Dorsolateral prefrontal cortex (tissue), 120 donors: ENCODE measurements at regions of chr3 and their contacts with region 1.

Region 1: DNA sequence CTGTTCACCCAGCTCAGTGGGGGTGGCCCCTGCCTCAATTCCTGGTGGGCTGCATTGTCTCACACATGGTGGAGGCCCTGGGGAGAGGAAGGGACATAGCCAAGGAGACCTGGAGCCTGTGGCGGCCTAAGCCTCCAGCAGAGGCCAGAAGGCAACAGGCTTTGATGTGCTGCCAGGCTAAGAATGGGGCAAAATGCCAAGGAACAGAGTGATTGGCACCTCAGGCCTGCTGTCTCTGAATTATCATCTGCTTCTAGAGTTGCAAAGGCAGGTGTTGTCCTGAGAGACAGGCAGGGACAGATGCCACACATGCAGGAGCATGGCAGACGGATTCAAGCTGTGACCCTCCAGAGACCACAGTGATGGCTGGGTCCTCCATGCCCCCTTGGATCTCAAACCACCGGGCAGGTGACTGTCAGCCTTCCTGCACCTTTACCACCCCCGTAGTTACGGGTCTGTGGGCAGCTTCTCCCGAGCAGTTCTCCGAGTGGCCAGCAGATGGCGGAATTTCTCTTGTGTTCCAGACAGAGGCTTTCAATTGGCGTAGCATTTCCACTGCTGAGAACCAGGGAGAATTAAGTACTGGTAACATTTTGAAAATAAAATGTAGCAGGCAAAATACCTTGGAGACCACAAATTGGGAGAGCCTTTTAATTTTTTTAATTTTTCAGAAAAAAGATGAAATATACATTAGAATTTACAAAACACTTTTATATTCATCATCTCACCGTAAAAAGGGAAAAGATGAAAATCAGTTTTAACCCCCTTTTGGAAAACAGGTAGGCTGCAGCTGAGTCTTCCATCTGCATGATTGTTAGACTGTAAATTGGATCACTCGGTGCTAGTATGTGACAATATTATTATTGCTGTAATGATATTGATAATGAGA is 525.5 kb upstream of the CFAP20DC start:
- DNase-seq: peak; percentile 77 to 95 (median 92)
- H3K4me3 ChIP-seq: peak overlapping the region in 2 of 59 donors; percentile 3 to 6
- H3K27ac ChIP-seq: peak overlapping the region in 20 of 59 donors; percentile 8 to 94 (median 84)
- H3K27me3 ChIP-seq: no peaks in the 10 kb centered on the region
- CTCF ChIP-seq: peak; percentile 94 to 100 (median 99)

Region 2: DNA sequence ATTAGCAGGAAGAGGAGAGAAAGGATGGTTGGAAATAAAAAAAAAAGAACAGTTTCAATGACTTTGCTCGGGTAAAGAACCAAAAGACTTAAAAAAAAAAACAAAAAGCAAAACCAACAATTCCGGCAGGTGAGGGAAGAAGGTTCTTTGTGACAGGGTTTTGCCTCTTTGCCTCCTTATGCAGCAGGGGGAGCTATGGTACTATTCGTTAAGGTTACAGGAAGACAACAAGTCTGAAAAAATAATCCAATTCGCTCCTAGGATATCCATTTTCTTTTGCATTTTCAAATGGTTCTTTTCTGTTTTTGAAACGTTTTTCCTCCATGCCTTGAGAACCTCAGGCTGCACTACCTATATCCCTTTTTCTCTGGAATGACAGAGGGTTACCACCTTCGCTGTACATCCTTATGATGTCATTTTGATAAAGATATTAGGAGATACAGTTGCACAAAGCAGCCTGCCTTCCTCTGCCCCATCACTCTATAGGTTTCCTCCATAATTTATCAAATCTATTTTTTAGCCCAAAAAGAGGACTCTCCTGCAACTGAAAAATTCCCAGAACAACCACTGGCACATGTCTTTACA is 580.5 kb before region 1 on chr3:
- intact Hi-C with region 1: loop called in 1 of 2 experiments (anchors 10 kb)
- DNase-seq: peak in 1 of 10 donors; percentile 30
- H3K4me3 ChIP-seq: peak overlapping the region in 1 of 59 donors; percentile 7
- H3K27ac ChIP-seq: no peak overlapping the region
- H3K27me3 ChIP-seq: peaks cover 0 to 14% (median 0%) of the 10 kb centered on the region in 45 donors
- CTCF ChIP-seq: peak; percentile 32 to 76 (median 60)

Region 3: GRCh38 chr3:59212128-59212779 is 363.1 kb before region 1 on chr3:
- intact Hi-C with region 1: loop called in 1 of 2 experiments (anchors 2 kb)
- DNase-seq: no peak
- H3K4me3 ChIP-seq: no peak overlapping the region
- H3K27ac ChIP-seq: no peak overlapping the region
- H3K27me3 ChIP-seq: peaks cover 0 to 10% (median 0%) of the 10 kb centered on the region in 45 donors
- CTCF ChIP-seq: peak; percentile 59 to 93 (median 84)

Region 4: DNA sequence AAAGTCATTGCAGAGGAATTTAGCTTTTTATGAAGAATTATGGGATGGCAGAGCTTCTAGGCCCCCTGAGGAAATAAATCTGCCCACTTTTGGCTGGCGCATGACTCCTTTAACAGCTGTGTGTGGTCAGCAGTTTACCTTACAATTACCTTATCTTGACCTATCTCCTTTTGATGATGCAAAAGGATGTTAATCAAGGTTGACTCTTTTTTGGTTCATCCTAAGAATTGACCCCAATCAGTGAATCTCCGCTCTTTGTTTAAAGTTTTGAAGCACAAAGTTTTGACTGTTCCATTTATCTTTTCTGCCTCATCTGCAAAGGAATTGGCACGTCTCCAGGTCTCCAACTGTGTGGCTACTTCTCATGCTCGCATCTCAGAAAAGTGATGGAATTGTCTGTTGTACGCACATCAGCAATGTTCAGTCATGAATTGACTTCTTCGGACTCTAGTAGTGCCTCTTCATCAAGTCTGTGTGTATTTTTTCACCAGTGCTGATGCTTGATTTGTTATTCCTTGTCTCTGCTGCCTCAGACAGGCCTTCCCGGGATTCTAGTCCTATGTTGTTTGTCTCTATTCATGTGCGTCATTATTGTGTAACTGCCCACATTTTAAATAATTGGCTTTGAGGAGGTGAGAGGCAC is 329.4 kb before region 1 on chr3:
- intact Hi-C with region 1: loop called in 1 of 2 experiments (anchors 10 kb)
- DNase-seq: peak in 1 of 10 donors; percentile 15
- H3K4me3 ChIP-seq: peak overlapping the region in 1 of 59 donors; percentile 0
- H3K27ac ChIP-seq: no peak overlapping the region
- H3K27me3 ChIP-seq: no peaks in the 10 kb centered on the region
- CTCF ChIP-seq: no peak

Region 5: DNA sequence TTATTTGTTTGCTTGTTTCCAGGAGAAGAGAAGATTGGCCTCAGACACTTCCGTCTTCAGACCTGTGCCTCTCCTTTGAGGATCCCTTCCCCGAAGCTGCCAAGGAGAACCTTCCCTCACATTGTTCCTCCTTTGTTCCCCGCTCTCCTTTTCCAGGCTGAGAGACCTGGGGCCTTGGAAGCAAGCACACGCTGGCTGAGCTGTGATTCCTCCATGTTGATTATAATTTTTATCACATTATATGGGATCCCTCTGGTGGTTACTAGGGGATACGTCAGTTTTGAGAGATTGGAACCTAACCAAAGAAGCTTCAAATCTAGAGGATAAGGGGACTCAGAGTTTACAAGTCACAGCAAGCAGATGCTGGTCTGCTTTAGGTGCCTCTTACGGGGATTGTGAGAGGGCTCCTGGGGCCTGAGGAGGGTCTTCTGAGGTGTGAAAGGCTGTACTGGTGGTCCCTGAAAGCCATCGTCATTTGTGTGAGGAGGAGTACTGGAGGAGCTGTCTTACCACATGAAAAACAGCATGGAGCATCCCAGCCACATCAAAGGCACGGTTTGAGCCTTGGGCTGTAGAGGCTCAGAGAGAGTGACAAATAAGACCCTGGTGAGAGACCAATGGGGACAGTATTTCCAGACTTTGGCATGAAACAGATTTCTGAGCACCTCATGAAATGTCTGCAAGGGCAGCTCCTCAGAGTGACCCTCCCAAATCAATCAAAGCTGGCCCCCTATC is 234.5 kb after region 1 on chr3:
- intact Hi-C with region 1: loop called (anchors 2 to 10 kb)
- DNase-seq: no peak
- H3K4me3 ChIP-seq: no peak overlapping the region
- H3K27ac ChIP-seq: peak overlapping the region in 6 of 59 donors; percentile 22 to 65 (median 35)
- H3K27me3 ChIP-seq: no peaks in the 10 kb centered on the region
- CTCF ChIP-seq: peak; percentile 28 to 75 (median 59)

Region 6: DNA sequence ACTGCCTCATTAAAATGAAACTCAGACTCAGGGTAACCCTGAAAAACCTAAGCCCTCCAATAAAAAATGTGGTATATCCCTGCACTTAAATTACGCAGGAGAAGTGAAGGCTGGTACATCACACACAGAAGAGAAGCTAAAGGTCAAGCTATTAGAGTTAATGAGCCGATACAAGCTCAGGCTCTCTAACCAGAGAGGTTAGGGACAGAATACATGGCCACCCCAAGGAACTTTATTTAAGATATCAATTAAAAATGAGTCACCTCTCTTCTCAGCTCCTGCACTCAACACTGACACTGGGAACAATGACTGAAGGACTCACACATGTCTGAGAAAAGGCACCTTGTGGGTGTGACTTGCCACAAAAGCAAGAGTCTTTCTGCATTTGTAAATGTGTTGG is 275.1 kb after region 1 on chr3:
- intact Hi-C with region 1: loop called in 1 of 2 experiments (anchors 5 kb)
- DNase-seq: no peak
- H3K4me3 ChIP-seq: no peak overlapping the region
- H3K27ac ChIP-seq: no peak overlapping the region
- H3K27me3 ChIP-seq: no peaks in the 10 kb centered on the region
- CTCF ChIP-seq: no peak

Region 7: DNA sequence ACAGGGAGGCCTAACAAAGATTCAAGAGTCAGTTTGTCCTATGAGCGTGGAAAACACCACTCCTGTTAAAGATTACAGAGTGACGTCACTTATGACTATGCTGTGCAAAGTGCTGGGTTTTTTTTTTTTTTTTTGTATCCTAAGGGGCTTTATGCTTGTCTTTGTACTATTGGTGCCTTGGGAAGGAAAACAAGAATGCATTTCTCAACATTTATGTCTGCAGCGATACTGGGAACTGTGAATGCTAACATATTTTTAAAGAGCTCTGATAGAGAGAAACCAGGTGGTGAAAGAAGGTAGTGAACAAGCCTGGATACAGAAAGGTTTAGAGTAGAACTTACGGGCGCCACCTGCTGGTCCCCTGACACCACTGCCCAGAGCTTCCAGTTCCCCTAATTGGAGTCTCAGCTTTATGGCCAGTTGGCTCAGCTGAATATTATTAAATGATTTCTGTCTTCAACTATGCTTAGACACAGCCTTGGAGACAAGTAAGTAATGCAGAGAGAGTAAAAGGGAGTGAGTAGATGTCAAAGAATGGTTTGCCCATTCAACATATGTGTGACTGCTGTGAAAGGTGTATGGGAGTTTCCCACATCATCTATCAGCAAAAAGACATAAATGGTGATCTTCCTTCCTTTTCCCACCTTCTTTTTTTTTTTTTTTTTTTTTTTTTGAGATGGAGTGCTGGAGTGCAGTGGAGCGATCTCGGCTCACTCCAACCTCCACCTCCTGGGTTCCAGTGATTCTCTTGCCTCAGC is 282.4 kb after region 1 on chr3:
- intact Hi-C with region 1: loop called (anchors 1 to 5 kb)
- DNase-seq: peak; percentile 65 to 84 (median 77)
- H3K4me3 ChIP-seq: no peak overlapping the region
- H3K27ac ChIP-seq: no peak overlapping the region
- H3K27me3 ChIP-seq: no peaks in the 10 kb centered on the region
- CTCF ChIP-seq: peak; percentile 78 to 95 (median 90)

Region 8: DNA sequence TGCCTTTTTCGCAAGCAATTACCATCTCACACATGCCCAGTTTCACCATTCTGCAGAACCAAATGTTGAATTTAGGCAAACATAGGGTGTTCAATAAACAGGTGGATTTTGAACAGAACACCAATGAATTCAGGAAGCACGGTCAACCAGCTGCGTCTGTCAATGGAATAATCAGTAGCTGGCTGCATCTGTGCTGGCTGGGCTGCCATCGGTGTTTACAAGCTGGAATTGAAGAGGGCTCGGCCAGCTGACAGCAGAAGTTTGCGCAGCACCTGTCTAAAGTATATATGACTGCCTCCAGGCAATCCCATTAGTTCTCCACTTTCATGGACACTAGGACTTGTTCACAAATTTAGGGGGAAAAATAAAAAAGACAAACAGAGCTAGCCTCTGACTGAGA is 470.9 kb after region 1 on chr3:
- intact Hi-C with region 1: no loop called
- DNase-seq: peak in 3 of 10 donors; percentile 5 to 29 (median 28)
- H3K4me3 ChIP-seq: peak overlapping the region in 53 of 59 donors; percentile 1 to 67 (median 41)
- H3K27ac ChIP-seq: no peak overlapping the region
- H3K27me3 ChIP-seq: no peaks in the 10 kb centered on the region
- CTCF ChIP-seq: no peak